ENCODE measurements at regions of chr10 and their contacts with region 1.

Region 1: GRCh38 chr10:104268716-104269645 is at the start of gene GSTO2:
- DNase-seq: peak; percentile 99
- H3K4me3 ChIP-seq: peak within 1 kb of the TSS; percentile 66 to 97
- H3K27ac ChIP-seq: peak within 1 kb of the TSS; percentile 71 to 85
- H3K4me1 ChIP-seq: peaks cover 6 to 11% of the 10 kb centered on the region in 2 experiments; a peak in 2 of 4 replicates
- H3K27me3 ChIP-seq: no peaks in the 10 kb centered on the region
- CTCF ChIP-seq: no peak
- EP300 ChIP-seq: no peak; a peak in 1 of 4 replicates
- RAD21 ChIP-seq: no peak
- polyA plus RNA-seq, gene GSTO2: 0.47 and 0.49 TPM in 2 replicates

Region 2: GRCh38 chr10:104254493-104255310 is 14.3 kb before region 1 on chr10 and contains the start of gene GSTO1:
- CTCF ChIA-PET with region 1: interaction called, 28 read pairs
- POLR2A ChIA-PET with region 1: interaction called, 10 read pairs
- DNase-seq: peak; percentile 86
- H3K4me3 ChIP-seq: peak within 1 kb of the TSS; percentile 87 to 90
- H3K27ac ChIP-seq: peak within 1 kb of the TSS; percentile 89 to 93
- H3K4me1 ChIP-seq: peaks cover 8 to 21% of the 10 kb centered on the region in 2 experiments
- H3K27me3 ChIP-seq: no peaks in the 10 kb centered on the region
- CTCF ChIP-seq: no peak
- EP300 ChIP-seq: no peak
- RAD21 ChIP-seq: no peak
- polyA plus RNA-seq, gene GSTO1: 114 and 126 TPM in 2 replicates

Measured in SK-N-SH (cell line).